HEK293 (cell line): ENCODE measurements at regions of chrX and their contacts with region 1.

Region 1: GRCh38 chrX:53362450-53362849 is 60.0 kb downstream of the SMC1A start:
- H3K4me3 ChIP-seq: no peak overlapping the region
- H3K27ac ChIP-seq: no peak overlapping the region
- H3K4me1 ChIP-seq: peaks cover 4% of the 10 kb centered on the region; the same call in 1 of the 2 replicates
- CTCF ChIP-seq: no peak

Region 2: GRCh38 chrX:53251307-53251706 is 111.1 kb before region 1 on chrX:
- CTCF ChIA-PET with region 1: no interaction called
- POLR2A ChIA-PET with region 1: no interaction called
- H3K4me3 ChIP-seq: no peak overlapping the region
- H3K27ac ChIP-seq: no peak overlapping the region
- H3K4me1 ChIP-seq: no peaks in the 10 kb centered on the region
- CTCF ChIP-seq: no peak

Region 3: GRCh38 chrX:53303195-53303594 is 59.3 kb before region 1 on chrX:
- CTCF ChIA-PET with region 1: no interaction called
- POLR2A ChIA-PET with region 1: no interaction called
- H3K4me3 ChIP-seq: no peak overlapping the region
- H3K27ac ChIP-seq: no peak overlapping the region
- H3K4me1 ChIP-seq: no peaks in the 10 kb centered on the region
- CTCF ChIP-seq: no peak

Region 4: GRCh38 chrX:53337101-53337500 is 25.3 kb before region 1 on chrX:
- CTCF ChIA-PET with region 1: no interaction called
- POLR2A ChIA-PET with region 1: no interaction called
- H3K4me3 ChIP-seq: no peak overlapping the region
- H3K27ac ChIP-seq: no peak overlapping the region
- H3K4me1 ChIP-seq: no peaks in the 10 kb centered on the region
- CTCF ChIP-seq: no peak

Region 5: DNA sequence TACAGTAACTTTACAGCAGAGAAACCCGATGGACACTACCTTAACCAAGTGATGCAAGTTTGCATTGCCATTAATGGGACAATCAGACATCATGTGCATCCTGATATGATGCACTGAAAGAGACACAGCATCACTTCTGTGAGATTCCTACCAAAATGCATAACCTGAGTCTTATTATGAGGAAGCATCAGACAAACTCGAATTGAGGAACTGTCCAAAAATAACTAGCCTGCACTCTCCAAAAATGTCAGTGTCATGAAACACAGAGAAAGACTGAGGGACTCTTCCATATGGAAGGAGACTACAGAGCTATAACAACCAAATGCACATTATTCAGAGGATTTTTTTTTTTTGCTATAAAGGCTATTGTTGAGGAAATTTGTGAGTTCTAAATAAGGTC is 14.5 kb before region 1 on chrX:
- CTCF ChIA-PET with region 1: no interaction called
- POLR2A ChIA-PET with region 1: no interaction called
- H3K4me3 ChIP-seq: no peak overlapping the region
- H3K27ac ChIP-seq: no peak overlapping the region
- H3K4me1 ChIP-seq: no peaks in the 10 kb centered on the region
- CTCF ChIP-seq: no peak

Region 6: GRCh38 chrX:53374222-53374820 is 11.9 kb after region 1 on chrX:
- CTCF ChIA-PET with region 1: interaction called, 3 read pairs
- POLR2A ChIA-PET with region 1: interaction called, 12 read pairs
- H3K4me3 ChIP-seq: no peak overlapping the region
- H3K27ac ChIP-seq: no peak overlapping the region
- H3K4me1 ChIP-seq: no peaks in the 10 kb centered on the region
- CTCF ChIP-seq: no peak; the same call in 1 of the 2 replicates